ENCODE measurements at regions of chr1 and their contacts with region 1.

Region 1: DNA sequence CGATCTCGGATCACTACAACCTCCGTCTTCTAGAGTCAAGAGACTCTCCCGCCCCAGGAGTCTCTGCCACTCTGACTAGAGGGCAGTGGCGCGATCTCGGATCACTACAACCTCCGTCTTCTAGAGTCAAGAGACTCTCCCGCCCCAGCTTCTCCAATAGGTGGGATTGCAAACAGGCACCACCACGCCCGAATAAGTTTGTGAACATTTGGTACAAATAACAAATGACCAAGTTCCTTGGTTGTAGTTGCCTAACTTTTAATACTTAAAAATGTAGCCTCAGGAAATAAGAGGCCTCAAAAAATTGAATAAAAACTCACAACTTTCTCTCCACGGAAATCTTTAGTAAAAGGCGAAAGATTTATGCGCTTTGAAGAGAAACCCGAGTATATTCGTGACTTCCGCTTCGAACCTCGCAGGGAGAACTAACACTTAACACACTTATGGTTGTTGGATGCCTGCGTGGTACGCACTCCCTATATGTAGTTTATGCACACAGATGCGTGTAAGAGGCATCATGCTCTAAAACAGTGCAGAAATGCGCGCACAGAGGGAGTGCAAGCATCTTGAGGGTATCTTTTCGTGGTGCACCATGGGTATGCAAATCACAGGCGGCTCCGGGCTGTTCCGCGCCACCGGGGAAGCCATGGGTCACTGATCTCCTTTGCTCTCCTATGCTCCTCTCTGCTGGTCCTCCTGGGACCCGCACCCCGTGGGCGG is 11.4 kb downstream of the BTBD19 start:
- DNase-seq: peak; percentile 83 to 91
- ATAC-seq: peak; percentile 79 to 91 (median 81)
- H3K4me3 ChIP-seq: peak overlapping the region; percentile 76
- H3K4me3 Mint-ChIP-seq: peak overlapping the region; percentile 94
- H3K27ac ChIP-seq: peak overlapping the region; percentile 100
- H3K27ac Mint-ChIP-seq: peak overlapping the region; percentile 99 to 100
- H3K4me1 ChIP-seq: peaks cover 30% of the 10 kb centered on the region
- H3K4me1 Mint-ChIP-seq: peaks cover 33 to 44% of the 10 kb centered on the region in 2 donors
- H3K27me3 ChIP-seq: no peaks in the 10 kb centered on the region
- H3K27me3 Mint-ChIP-seq: no peaks in the 10 kb centered on the region
- CTCF ChIP-seq: no peak

Region 2: GRCh38 chr1:44786138-44786840 is 33.5 kb before region 1 on chr1:
- intact Hi-C with region 1: loop called (anchors 1 kb)
- DNase-seq: peak; percentile 74 to 91
- ATAC-seq: peak; percentile 81 to 89 (median 82)
- H3K4me3 ChIP-seq: peak overlapping the region; percentile 49
- H3K4me3 Mint-ChIP-seq: peak overlapping the region; percentile 75
- H3K27ac ChIP-seq: peak overlapping the region; percentile 20
- H3K27ac Mint-ChIP-seq: peak overlapping the region; percentile 62 to 80
- H3K4me1 ChIP-seq: peaks cover 31% of the 10 kb centered on the region
- H3K4me1 Mint-ChIP-seq: peaks cover 21 to 26% of the 10 kb centered on the region in 2 donors
- H3K27me3 ChIP-seq: no peaks in the 10 kb centered on the region
- H3K27me3 Mint-ChIP-seq: no peaks in the 10 kb centered on the region
- CTCF ChIP-seq: peak; percentile 99

Region 3: GRCh38 chr1:44799770-44800584 is 19.8 kb before region 1 on chr1 and contains the start of gene PLK3:
- intact Hi-C with region 1: loop called (anchors 2 kb)
- DNase-seq: peak; percentile 93 to 100
- ATAC-seq: peak; percentile 88 to 96 (median 88)
- H3K4me3 ChIP-seq: peak within 1 kb of the TSS; percentile 77
- H3K4me3 Mint-ChIP-seq: peak within 1 kb of the TSS; percentile 97
- H3K27ac ChIP-seq: peak within 1 kb of the TSS; percentile 83
- H3K27ac Mint-ChIP-seq: peak within 1 kb of the TSS; percentile 98 to 100
- H3K4me1 ChIP-seq: peaks cover 28% of the 10 kb centered on the region
- H3K4me1 Mint-ChIP-seq: peaks cover 5 to 20% of the 10 kb centered on the region in 2 donors
- H3K27me3 ChIP-seq: no peaks in the 10 kb centered on the region
- H3K27me3 Mint-ChIP-seq: no peaks in the 10 kb centered on the region
- CTCF ChIP-seq: peak; percentile 71
- total RNA-seq, gene PLK3: 39.5 to 89.2 (median 78.1) TPM